Transverse colon (tissue), 4 donors: ENCODE measurements at regions of chr1 and their contacts with region 1.

Region 1: DNA sequence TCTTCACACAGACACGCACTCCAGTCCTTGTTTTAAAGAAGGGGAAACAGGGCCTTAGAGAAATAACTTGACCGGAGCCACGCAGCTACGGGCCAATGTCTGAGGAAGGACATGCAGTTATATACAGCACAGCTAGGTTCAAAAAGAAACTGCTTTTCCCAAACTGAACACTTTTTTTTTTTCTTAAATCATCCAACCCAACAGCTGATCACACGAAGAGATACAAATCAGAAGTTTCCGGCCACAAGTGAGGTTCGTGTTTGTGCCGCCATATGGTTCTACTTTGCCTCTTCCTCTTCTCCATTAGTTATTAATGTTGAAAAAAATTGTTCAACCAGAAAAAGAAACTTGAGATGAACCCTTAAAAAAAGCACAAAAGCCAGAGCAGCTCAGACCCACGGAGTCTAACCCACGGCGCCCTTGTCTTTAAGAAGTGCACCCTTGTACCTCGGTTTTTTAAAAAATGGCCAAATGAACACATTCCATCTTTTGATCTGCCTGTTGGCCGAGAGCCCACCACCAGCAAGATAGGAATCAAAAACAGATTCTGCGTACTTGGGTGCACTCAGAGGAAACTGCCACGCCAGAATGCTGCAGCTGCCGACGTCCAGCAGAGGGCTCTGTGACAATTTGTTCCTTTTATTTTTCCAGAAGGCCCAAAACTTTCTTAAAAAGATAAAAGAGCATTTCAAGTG is 78.9 kb downstream of the SLC66A1 start:
- DNase-seq: peak; percentile 71
- H3K4me3 ChIP-seq: no peak overlapping the region
- H3K27ac ChIP-seq: peak overlapping the region; percentile 69 to 85 (median 77)
- H3K4me1 ChIP-seq: peaks cover 44 to 75% (median 50%) of the 10 kb centered on the region in 4 donors
- H3K27me3 ChIP-seq: no peaks in the 10 kb centered on the region
- CTCF ChIP-seq: peak; percentile 78 to 87 (median 80)
- EP300 ChIP-seq: no peak
- POLR2A ChIP-seq: no peak

Region 2: DNA sequence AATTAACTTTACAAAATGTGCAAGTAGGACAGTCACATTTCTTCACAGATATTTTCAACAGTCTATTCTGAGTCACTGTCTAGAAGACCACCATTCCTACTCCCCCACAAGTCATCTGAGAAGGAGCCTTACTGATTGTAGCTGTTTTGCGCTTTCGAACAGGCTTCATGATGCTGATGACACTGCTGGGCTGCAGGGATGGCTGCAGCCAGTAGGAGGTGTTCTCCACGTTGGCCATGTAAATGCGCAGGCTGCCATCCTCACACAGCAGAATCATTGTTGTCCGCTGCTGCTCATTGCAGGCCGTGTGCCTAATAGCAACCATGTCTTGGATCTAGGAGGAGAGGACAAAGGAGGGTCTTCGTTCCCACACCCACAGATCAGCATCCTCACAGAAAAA is 237.9 kb before region 1 on chr1:
- in situ Hi-C with region 1: no loop called
- intact Hi-C with region 1: no loop called
- DNase-seq: no peak
- H3K4me3 ChIP-seq: no peak overlapping the region
- H3K27ac ChIP-seq: no peak overlapping the region
- H3K4me1 ChIP-seq: peaks cover 0 to 28% (median 8%) of the 10 kb centered on the region in 4 donors
- H3K27me3 ChIP-seq: no peaks in the 10 kb centered on the region
- CTCF ChIP-seq: no peak
- EP300 ChIP-seq: no peak
- POLR2A ChIP-seq: no peak

Region 3: DNA sequence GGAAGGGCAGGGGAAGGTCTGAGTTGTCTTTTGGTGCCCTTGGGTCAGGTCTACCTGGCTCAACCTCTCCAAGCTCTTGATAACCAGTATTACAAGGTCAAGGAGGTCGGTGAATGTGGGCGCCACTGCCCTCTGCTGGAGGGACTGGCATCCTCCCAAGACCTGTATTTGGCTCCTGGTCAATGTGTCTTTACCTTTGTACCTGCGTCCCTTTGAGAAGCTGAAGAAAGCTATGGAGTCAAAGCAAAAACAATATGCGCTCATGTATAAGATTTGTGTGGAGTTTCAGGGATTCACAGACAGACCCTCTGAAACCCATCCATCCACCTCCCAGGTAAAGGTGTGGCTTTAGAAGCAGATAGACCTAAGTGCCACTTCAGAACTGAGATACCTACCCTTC is 191.3 kb after region 1 on chr1:
- in situ Hi-C with region 1: loop called in 2 of 4 experiments (anchors 10 kb)
- intact Hi-C with region 1: no loop called
- DNase-seq: peak; percentile 88
- H3K4me3 ChIP-seq: no peak overlapping the region
- H3K27ac ChIP-seq: no peak overlapping the region
- H3K4me1 ChIP-seq: peaks cover 0 to 7% (median 1%) of the 10 kb centered on the region in 4 donors
- H3K27me3 ChIP-seq: no peaks in the 10 kb centered on the region
- CTCF ChIP-seq: peak; percentile 61 to 84 (median 74)
- EP300 ChIP-seq: no peak
- POLR2A ChIP-seq: no peak